HepG2 (cell line): ENCODE measurements at regions of chr15 and their contacts with region 1.

Region 1: DNA sequence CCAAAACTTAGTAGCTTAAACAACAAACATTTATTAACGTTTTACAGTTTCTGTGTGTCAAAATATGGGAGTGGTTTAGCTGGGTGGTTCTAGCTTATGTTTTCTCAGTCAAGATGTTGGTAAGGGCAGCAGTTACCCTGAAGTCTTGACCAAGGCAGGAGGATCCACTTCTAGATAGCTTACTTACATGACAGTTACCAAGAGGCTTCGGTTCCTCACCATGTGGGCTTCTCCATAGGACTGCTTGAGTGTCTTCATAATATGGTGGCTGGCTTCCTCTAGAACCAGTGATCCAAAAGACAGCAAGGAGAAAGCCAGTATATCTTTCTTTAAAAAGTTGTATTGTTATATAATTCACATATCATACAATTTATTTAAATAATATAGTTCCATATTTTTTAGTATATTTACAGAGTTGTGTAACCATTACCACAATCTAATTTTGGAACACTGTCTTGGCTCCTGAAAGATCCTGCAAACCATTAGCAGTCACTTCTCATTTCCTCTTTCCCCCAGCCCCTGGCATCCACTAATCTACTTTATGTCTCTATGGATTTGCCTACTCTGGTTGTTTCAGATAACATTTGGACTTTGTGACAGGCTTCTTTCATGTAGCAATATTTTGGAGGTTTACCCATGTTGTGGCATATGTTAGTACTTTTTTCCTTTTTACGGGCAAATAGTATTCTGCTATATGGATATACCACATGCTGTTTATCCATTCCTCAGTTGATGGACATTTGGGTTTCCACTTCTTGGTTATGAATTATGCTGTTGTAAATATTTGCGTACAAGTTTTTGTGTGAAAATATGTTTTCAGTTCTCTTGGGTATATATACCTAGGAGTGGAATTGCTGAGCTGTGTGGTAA is 33.3 kb downstream of the MAPK6 start:
- DNase-seq: peak; percentile 36
- ATAC-seq: peak; percentile 27; the same call in 2 of the 3 replicates
- H3K4me3 ChIP-seq: no peak overlapping the region
- H3K27ac ChIP-seq: no peak overlapping the region
- H3K4me1 ChIP-seq: peaks cover 42% of the 10 kb centered on the region
- H3K27me3 ChIP-seq: no peaks in the 10 kb centered on the region
- CTCF ChIP-seq: no peak
- EP300 ChIP-seq: no peak
- POLR2A ChIP-seq: no peak
- RAD21 ChIP-seq: no peak

Region 2: DNA sequence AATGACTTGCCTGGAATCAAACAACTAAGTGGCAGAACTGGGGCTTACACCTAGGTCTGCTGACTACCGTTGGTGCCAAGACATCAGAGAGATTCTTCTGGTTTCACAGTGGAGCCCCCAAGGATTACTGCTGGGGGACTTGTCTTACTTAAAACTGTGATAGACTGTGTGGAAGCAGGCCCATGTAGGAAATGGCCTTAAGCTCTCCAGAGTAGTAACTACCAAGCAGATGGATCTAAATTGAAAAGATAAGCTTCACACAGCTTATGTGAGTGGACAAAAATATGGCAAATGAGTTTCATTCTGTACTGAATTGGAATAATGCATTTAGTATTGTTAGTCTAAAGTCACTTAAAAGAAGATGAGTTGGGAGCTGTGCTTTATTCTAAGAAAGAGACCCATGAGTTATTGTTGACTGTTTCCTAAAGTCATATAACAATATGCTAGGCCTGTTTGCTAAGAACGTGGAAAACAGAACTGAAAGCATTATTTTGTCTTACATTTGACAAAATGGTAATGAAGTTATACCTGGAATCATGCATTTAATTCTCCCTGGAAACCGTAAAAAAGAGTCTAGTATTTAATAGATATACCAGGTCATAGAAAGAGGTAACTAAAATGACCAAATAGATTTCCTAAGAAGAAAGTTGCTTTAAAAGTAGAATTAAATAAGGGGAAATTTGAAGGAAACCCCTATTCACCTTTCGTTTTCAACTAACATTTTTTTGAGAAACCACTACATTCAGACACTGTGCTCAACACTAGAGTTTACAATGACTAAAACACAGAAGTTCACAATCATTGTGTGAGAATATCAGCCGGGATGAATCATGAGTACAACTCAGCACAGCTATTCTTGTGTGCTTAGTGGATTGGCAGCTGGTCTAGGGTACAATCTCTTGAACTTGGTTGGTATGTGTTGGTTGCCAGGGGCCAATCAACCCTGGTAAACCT is 46.3 kb before region 1 on chr15:
- CTCF ChIA-PET with region 1: no interaction called
- POLR2A ChIA-PET with region 1: no interaction called
- in situ Hi-C with region 1: no loop called
- intact Hi-C with region 1: no loop called
- DNase-seq: peak; percentile 70
- ATAC-seq: peak; percentile 50
- H3K4me3 ChIP-seq: no peak overlapping the region
- H3K27ac ChIP-seq: peak overlapping the region; percentile 70
- H3K4me1 ChIP-seq: peaks cover 60% of the 10 kb centered on the region
- H3K27me3 ChIP-seq: no peaks in the 10 kb centered on the region
- CTCF ChIP-seq: no peak
- EP300 ChIP-seq: no peak
- POLR2A ChIP-seq: no peak
- RAD21 ChIP-seq: no peak

Region 3: DNA sequence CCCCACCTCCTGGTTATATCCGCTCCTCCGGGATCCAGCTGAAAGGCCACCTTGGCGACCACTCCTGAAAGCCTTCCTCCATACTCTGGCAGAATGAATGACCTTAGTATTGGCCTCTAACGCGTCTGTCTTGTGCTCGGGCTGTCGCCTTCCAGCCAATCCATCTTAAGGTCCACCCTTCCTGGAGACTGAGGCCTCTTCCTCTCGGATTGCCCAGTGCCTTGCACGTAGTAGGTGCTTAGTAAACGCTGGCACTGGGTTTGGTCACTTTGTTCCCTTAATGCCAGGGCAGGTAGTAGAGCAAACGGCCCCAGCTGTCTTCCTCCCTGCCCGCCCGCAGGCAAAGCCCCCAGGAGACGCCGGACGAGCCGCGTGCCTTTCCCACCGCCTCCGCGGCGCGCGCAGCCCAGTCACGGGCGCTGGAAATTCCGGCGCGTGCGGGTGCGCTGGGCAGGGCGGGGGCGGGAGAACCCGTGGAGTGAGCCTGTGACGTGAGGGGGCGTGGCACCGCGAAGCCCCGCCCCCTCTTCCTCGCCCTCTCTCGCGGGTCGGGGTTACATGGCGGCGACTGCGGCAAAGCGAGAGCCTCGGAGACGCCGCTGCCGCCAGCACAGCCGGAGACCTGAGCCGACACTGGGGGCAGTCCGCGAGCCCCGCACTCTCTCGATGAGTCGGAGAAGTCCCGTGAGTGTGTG is 33.5 kb before region 1 on chr15 and contains the start of gene MAPK6:
- CTCF ChIA-PET with region 1: no interaction called
- POLR2A ChIA-PET with region 1: no interaction called
- in situ Hi-C with region 1: no loop called
- intact Hi-C with region 1: loop called (anchors 1 kb)
- DNase-seq: peak; percentile 80
- ATAC-seq: peak; percentile 68
- H3K4me3 ChIP-seq: peak within 1 kb of the TSS; percentile 62 to 99 (median 77)
- H3K27ac ChIP-seq: peak within 1 kb of the TSS; percentile 99
- H3K4me1 ChIP-seq: peaks cover 38% of the 10 kb centered on the region
- H3K27me3 ChIP-seq: no peaks in the 10 kb centered on the region; a peak in 1 of 5 replicates
- CTCF ChIP-seq: 0 out of 2 replicates have a peak, but pooled peaks have one; percentile 11
- EP300 ChIP-seq: peak; percentile 11 to 23; a peak in 1 of 4 replicates
- POLR2A ChIP-seq: peak; percentile 81 to 87
- RAD21 ChIP-seq: peak; percentile 49; the same call in 1 of the 2 replicates
- total RNA-seq, gene MAPK6: 99.7 and 188 TPM in 2 replicates